Activated T-helper 1 cell treated with anti-CD3 and anti-CD28 coated beads, Interleukin-12 subunit alpha, Interleukin-12 subunit beta, Interleukin-2, Interleukin-4 antibody, amounts not matched to agents 30 ng/mL and 10 ng/mL and 1 ng/mL, durations not matched to agents 14 hours and 24 hours and 36 hours (primary cell): ENCODE measurements at regions of chr15 and their contacts with region 1.

Region 1: DNA sequence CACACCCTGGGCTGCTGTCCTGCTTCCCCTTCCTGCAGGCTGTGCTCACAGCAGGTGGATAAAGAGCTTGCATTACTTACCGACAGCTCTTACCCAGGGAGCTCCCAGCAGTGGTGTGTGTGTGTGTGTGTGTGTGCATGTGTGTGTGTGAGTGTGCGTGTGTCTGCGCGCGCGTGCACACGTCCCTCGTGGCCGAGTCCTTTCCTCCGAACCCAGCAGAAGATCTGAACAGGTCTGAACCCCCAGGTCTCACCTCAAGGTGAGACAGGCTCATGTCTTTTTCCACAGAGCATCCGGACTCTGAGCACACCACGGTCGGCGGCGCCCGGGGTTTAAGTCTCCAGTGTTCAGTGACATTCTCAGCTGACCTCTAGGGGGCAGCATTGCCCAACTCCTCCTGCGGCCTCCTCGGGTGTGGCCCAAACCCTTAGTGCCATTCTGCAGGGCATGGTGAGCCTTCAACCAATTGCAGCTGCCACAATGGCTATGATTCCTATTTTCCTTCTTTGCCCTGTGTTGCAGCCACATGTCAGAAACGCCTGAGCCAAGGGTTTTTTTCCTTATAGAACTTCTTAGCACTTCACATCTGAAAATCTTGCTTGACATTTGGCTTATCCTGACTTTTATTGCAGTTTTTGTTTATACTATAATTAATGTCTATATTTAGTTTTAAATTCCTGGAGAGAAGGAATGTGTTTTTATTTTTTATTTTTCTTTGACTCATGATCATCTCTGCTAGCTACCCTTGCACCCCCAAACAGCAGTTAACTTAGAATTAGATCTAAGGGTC is 64.1 kb upstream of the KLHL25 start:
- DNase-seq: peak; percentile 64
- H3K4me3 Mint-ChIP-seq: peak overlapping the region; percentile 37
- H3K27ac Mint-ChIP-seq: no peak overlapping the region
- H3K4me1 Mint-ChIP-seq: peaks cover 11% of the 10 kb centered on the region
- H3K27me3 Mint-ChIP-seq: peaks cover 25% of the 10 kb centered on the region

Region 2: GRCh38 chr15:86743283-86743903 is 884.6 kb after region 1 on chr15:
- intact Hi-C with region 1: loop called (anchors 2 kb)
- DNase-seq: peak; percentile 9
- H3K4me3 Mint-ChIP-seq: no peak overlapping the region
- H3K27ac Mint-ChIP-seq: no peak overlapping the region
- H3K4me1 Mint-ChIP-seq: no peaks in the 10 kb centered on the region
- H3K27me3 Mint-ChIP-seq: no peaks in the 10 kb centered on the region

Region 3: GRCh38 chr15:87604857-87605446 is 1746.2 kb after region 1 on chr15:
- intact Hi-C with region 1: loop called (anchors 2 kb)
- DNase-seq: no peak
- H3K4me3 Mint-ChIP-seq: no peak overlapping the region
- H3K27ac Mint-ChIP-seq: no peak overlapping the region
- H3K4me1 Mint-ChIP-seq: no peaks in the 10 kb centered on the region
- H3K27me3 Mint-ChIP-seq: peaks cover 2% of the 10 kb centered on the region